ENCODE measurements at regions of chr17 and their contacts with region 1.

Region 1: GRCh38 chr17:41665566-41666236 is 23.0 kb upstream of the EIF1 start:
- DNase-seq: peak; percentile 30
- H3K4me3 ChIP-seq: peak overlapping the region; percentile 28 to 66 (median 50)
- H3K27ac ChIP-seq: peak overlapping the region; percentile 93 to 98 (median 97)
- H3K4me1 ChIP-seq: peaks cover 21 to 82% (median 28%) of the 10 kb centered on the region in 3 donors
- H3K27me3 ChIP-seq: no peaks in the 10 kb centered on the region
- CTCF ChIP-seq: peak; percentile 85 to 99 (median 98)
- POLR2A ChIP-seq: peak in 3 of 4 donors; percentile 35 to 88 (median 86)

Region 2: DNA sequence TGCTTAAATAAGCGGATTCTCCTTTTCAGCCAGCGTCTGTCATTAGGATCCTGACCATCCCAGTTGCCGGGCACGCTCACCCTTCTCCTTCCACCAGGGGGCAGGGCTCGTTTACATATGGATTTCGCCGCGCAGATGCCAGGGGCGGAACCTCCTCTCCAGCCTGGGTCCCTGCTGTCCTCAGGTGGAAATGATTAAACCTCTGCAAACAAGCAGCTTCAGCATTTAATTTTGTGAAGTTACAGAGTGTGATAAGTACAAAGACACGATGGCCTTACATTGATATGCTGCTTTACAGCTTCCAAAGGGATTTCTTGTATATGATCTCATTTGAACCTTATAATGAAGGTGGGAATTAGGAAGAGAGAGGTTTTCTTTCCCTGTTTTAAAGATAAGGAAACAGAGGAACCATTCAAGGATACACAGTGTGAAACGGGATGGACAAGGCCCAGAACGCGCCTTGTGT is 862.1 kb before region 1 on chr17:
- intact Hi-C with region 1: loop called (anchors 10 kb)
- DNase-seq: no peak
- H3K4me3 ChIP-seq: no peak overlapping the region
- H3K27ac ChIP-seq: no peak overlapping the region
- H3K4me1 ChIP-seq: no peaks in the 10 kb centered on the region
- H3K27me3 ChIP-seq: peaks cover 0 to 78% (median 0%) of the 10 kb centered on the region in 4 donors
- CTCF ChIP-seq: peak; percentile 56 to 94 (median 92)
- POLR2A ChIP-seq: no peak

Measured in esophagus squamous epithelium (tissue), 5 donors.